Activated T-helper 1 cell treated with anti-CD3 and anti-CD28 coated beads, Interleukin-12 subunit alpha, Interleukin-12 subunit beta, Interleukin-2, Interleukin-4 antibody, amounts not matched to agents 30 ng/mL and 10 ng/mL and 1 ng/mL, durations not matched to agents 14 hours and 24 hours and 36 hours (primary cell): ENCODE measurements at regions of chr6 and their contacts with region 1.

Region 1: GRCh38 chr6:93389192-93389591 is 30.2 kb downstream of the EPHA7 start:
- DNase-seq: no peak
- H3K4me3 Mint-ChIP-seq: no peak overlapping the region
- H3K27ac Mint-ChIP-seq: no peak overlapping the region
- H3K4me1 Mint-ChIP-seq: no peaks in the 10 kb centered on the region
- H3K27me3 Mint-ChIP-seq: no peaks in the 10 kb centered on the region

Region 2: GRCh38 chr6:92900318-92900717 is 488.9 kb before region 1 on chr6:
- intact Hi-C with region 1: loop called (anchors 5 kb)
- DNase-seq: no peak
- H3K4me3 Mint-ChIP-seq: no peak overlapping the region
- H3K27ac Mint-ChIP-seq: no peak overlapping the region
- H3K4me1 Mint-ChIP-seq: no peaks in the 10 kb centered on the region
- H3K27me3 Mint-ChIP-seq: no peaks in the 10 kb centered on the region

Region 3: GRCh38 chr6:93474733-93475179 is 85.6 kb after region 1 on chr6:
- intact Hi-C with region 1: no loop called
- DNase-seq: no peak
- H3K4me3 Mint-ChIP-seq: no peak overlapping the region
- H3K27ac Mint-ChIP-seq: no peak overlapping the region
- H3K4me1 Mint-ChIP-seq: no peaks in the 10 kb centered on the region
- H3K27me3 Mint-ChIP-seq: no peaks in the 10 kb centered on the region